ENCODE measurements at regions of chr20 and their contacts with region 1.

Region 1: GRCh38 chr20:15949391-15949790 is 623.9 kb downstream of the KIF16B start:
- DNase-seq: no peak
- ATAC-seq: no peak
- H3K4me3 Mint-ChIP-seq: no peak overlapping the region
- H3K27ac Mint-ChIP-seq: no peak overlapping the region
- H3K4me1 Mint-ChIP-seq: peaks cover 27% of the 10 kb centered on the region
- H3K27me3 Mint-ChIP-seq: no peaks in the 10 kb centered on the region
- CTCF ChIP-seq: no peak

Region 2: DNA sequence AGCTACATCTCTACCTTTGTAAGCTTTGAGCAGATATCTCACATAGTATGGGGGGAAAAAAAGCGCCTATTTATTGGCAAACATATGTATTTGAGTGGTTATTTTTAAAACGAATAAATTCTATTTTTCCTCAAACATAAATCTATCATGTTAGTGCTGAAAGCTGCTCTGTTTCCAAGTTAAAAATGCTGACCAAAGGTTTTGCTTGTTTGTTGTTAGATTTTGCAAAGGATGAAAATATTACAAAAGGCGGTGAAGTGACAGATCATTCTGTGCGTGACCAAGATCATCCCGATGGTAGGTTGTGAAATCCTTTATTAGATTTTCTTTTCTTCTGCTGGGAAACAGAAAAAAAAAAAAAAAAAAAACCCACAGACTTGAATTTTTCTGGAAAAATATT is 17.9 kb after region 1 on chr20:
- CTCF ChIA-PET with region 1: no interaction called
- POLR2A ChIA-PET with region 1: interaction called, 4 read pairs
- intact Hi-C with region 1: loop called (anchors 2 kb)
- DNase-seq: no peak
- ATAC-seq: no peak
- H3K4me3 Mint-ChIP-seq: no peak overlapping the region
- H3K27ac Mint-ChIP-seq: no peak overlapping the region
- H3K4me1 Mint-ChIP-seq: peaks cover 2% of the 10 kb centered on the region
- H3K27me3 Mint-ChIP-seq: no peaks in the 10 kb centered on the region
- CTCF ChIP-seq: no peak